Natural killer cell (primary cell): ENCODE measurements at regions of chr14 and their contacts with region 1.

Region 1: GRCh38 chr14:85934123-85934885 is 404.4 kb downstream of the FLRT2 start:
- DNase-seq: peak; percentile 45 to 91
- ATAC-seq: peak; percentile 85 to 94 (median 87)
- H3K4me3 ChIP-seq: peak overlapping the region; percentile 55
- H3K4me3 Mint-ChIP-seq: peak overlapping the region; percentile 94
- H3K27ac ChIP-seq: peak overlapping the region; percentile 78
- H3K27ac Mint-ChIP-seq: peak overlapping the region; percentile 86 to 94
- H3K4me1 ChIP-seq: peaks cover 7% of the 10 kb centered on the region
- H3K4me1 Mint-ChIP-seq: peaks cover 32 to 44% of the 10 kb centered on the region in 2 donors
- H3K27me3 ChIP-seq: no peaks in the 10 kb centered on the region
- H3K27me3 Mint-ChIP-seq: no peaks in the 10 kb centered on the region
- CTCF ChIP-seq: no peak

Region 2: DNA sequence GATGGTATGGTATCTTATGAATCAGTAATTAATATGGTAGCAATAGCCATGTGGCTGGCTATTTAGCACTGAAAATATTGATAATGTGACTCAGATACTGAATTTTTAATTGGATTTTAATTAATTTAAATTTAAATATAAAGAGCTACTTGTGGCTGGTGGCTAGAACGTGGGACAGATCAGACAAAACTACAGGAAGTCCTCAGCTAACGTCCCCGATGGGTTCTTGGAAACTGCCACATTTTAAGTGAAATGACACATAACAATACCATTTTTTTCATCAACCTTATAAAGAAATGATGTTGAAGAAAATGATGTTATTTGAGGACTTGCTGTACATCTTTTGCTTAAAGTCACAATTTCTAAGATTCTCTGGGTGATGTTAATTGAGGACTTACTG is 542.4 kb before region 1 on chr14:
- intact Hi-C with region 1: no loop called
- DNase-seq: no peak
- ATAC-seq: peak in 1 of 3 donors; percentile 37
- H3K4me3 ChIP-seq: no peak overlapping the region
- H3K4me3 Mint-ChIP-seq: peak overlapping the region; percentile 25
- H3K27ac ChIP-seq: no peak overlapping the region
- H3K27ac Mint-ChIP-seq: no peak overlapping the region
- H3K4me1 ChIP-seq: no peaks in the 10 kb centered on the region
- H3K4me1 Mint-ChIP-seq: peaks cover 9 to 16% of the 10 kb centered on the region in 2 donors
- H3K27me3 ChIP-seq: no peaks in the 10 kb centered on the region
- H3K27me3 Mint-ChIP-seq: no peaks in the 10 kb centered on the region
- CTCF ChIP-seq: no peak

Region 3: GRCh38 chr14:85702997-85703396 is 231.3 kb before region 1 on chr14:
- intact Hi-C with region 1: loop called (anchors 5 kb)
- DNase-seq: no peak
- ATAC-seq: no peak
- H3K4me3 ChIP-seq: no peak overlapping the region
- H3K4me3 Mint-ChIP-seq: no peak overlapping the region
- H3K27ac ChIP-seq: no peak overlapping the region
- H3K27ac Mint-ChIP-seq: peak overlapping the region; percentile 90 to 93
- H3K4me1 ChIP-seq: no peaks in the 10 kb centered on the region
- H3K4me1 Mint-ChIP-seq: peaks cover 19 to 26% of the 10 kb centered on the region in 2 donors
- H3K27me3 ChIP-seq: no peaks in the 10 kb centered on the region
- H3K27me3 Mint-ChIP-seq: no peaks in the 10 kb centered on the region
- CTCF ChIP-seq: no peak

Region 4: DNA sequence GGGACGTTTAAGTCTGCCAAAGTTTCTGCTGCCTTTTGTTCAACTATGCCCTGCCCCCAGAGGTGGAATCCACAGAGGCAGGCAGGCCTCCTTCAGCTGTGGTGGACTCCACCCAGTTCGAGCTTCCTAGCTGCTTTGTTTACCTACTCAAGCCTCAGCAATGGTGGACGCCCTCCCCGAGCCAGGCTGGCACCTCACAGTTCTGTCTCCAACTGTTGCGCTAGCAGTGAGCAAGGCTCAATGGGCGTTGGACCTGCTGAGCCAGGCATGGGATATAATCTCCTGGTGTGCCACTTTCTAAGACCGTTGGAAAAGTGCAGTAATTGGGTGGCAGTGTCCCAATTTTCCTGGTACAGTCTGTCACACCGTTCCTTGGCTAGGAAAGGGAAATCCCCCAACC is 40.3 kb after region 1 on chr14:
- intact Hi-C with region 1: no loop called
- DNase-seq: no peak
- ATAC-seq: no peak
- H3K4me3 ChIP-seq: no peak overlapping the region
- H3K4me3 Mint-ChIP-seq: no peak overlapping the region
- H3K27ac ChIP-seq: no peak overlapping the region
- H3K27ac Mint-ChIP-seq: no peak overlapping the region
- H3K4me1 ChIP-seq: no peaks in the 10 kb centered on the region
- H3K4me1 Mint-ChIP-seq: peaks cover 20 to 26% of the 10 kb centered on the region in 2 donors
- H3K27me3 ChIP-seq: no peaks in the 10 kb centered on the region
- H3K27me3 Mint-ChIP-seq: no peaks in the 10 kb centered on the region
- CTCF ChIP-seq: no peak